Gastrocnemius medialis (tissue), 4 donors: ENCODE measurements at regions of chr2 and their contacts with region 1.

Region 1: DNA sequence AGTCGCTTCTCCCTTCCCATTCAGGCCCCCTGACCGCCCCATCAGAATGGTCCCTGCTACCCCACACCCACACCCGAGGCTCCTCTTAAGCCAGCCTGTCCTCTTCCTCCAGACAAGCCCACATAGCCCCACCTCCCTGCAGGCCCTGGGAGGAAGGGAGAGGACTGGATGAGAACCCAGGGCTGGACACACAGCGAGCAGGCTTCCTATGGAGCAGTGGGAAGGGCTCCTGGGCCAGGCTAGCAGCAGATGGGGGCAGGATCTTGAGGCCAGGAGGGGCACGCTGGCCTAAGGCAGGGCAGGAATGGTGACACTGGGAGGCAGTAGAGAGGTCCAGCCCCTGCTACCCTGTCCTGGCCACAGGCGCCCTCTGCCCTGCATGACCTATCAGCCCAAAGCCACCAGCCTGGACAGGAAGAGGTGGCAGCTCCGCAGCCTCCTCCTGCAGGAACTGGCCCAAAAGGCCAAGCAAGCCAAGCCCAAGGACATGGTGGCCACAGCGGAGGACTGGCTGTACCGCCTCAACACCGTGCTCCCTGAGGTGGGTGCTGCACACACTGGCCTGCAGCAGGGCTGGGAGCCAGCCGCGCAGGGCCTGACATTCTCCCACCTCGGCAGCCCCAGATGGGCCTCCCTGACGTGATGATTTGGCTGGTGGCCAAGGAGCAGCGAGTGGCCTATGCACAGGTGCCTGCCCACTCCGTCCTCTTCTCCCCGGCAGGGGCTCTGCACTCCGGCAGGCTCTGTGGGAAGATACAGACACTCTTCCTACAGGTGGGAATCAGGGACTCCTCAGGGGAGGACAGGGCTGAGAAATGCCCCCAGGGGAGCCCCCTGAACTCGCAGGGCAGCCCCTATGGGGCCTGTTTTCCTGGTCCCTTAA is 43.3 kb downstream of the FER1L5 start:
- DNase-seq: no peak
- ATAC-seq: no peak
- H3K4me3 ChIP-seq: no peak overlapping the region
- H3K27ac ChIP-seq: no peak overlapping the region
- H3K4me1 ChIP-seq: peaks cover 0 to 7% of the 10 kb centered on the region in 2 donors
- H3K27me3 ChIP-seq: peaks cover 0 to 12% (median 7%) of the 10 kb centered on the region in 3 donors
- CTCF ChIP-seq: no peak
- POLR2A ChIP-seq: no peak

Region 2: GRCh38 chr2:98577313-98577712 is 1891.5 kb after region 1 on chr2:
- in situ Hi-C with region 1: no loop called
- intact Hi-C with region 1: loop called (anchors 10 kb)
- DNase-seq: no peak
- ATAC-seq: no peak
- H3K4me3 ChIP-seq: no peak overlapping the region
- H3K27ac ChIP-seq: no peak overlapping the region
- H3K4me1 ChIP-seq: no peaks in the 10 kb centered on the region
- H3K27me3 ChIP-seq: no peaks in the 10 kb centered on the region
- CTCF ChIP-seq: no peak
- POLR2A ChIP-seq: no peak